Left lung (tissue), 14 donors: ENCODE measurements at regions of chr6 and their contacts with region 1.

Region 1: DNA sequence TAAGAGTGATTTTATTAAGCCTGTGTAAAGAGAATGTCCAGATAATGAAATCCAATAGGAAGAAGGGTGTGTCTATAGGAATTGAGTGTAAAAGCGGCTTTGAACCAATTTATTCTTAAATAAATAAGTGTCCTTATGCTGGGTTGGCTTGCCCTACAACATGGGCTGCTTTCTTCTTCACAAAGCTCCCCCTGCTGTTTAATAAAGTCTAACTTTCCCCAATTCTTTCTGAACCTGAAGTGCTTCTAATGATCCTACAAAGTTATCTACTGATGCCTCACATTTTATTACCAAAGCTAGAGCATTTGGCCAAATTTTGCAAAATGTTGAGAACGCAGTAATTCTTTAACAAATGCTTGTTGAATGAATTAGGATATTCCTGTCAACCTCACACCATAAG is 36.3 kb upstream of the SIRT5 start:
- DNase-seq: peak in 2 of 4 donors; percentile 29 to 61
- ATAC-seq: peak; percentile 72
- H3K4me3 ChIP-seq: no peak overlapping the region
- H3K27ac ChIP-seq: no peak overlapping the region
- H3K4me1 ChIP-seq: no peaks in the 10 kb centered on the region
- H3K27me3 ChIP-seq: no peaks in the 10 kb centered on the region
- CTCF ChIP-seq: peak; percentile 14 to 21

Region 2: DNA sequence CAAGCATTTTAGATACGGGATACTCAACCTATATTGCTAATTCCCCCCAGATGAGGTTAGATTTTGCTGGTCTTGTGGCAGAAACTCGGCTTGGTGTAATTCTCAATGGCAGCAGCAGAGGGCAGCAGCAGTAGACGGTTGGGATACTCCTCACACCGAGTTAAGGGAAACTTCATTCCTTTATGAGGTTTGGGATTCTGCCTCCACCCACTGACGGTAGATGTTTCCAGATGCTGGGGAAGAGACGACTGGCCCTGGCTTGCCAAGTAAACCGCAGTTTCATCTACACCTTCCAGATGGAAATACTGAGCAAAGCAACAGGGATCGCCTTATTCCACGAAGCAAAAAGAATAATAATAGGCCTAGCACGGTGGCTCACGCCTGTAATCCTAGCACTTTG is 201.5 kb before region 1 on chr6:
- intact Hi-C with region 1: loop called in 1 of 2 experiments (anchors 5 kb)
- DNase-seq: peak in 3 of 4 donors; percentile 64 to 80 (median 78)
- ATAC-seq: peak; percentile 94
- H3K4me3 ChIP-seq: no peak overlapping the region
- H3K27ac ChIP-seq: no peak overlapping the region
- H3K4me1 ChIP-seq: peaks cover 4 to 25% of the 10 kb centered on the region in 2 donors
- H3K27me3 ChIP-seq: no peaks in the 10 kb centered on the region
- CTCF ChIP-seq: peak; percentile 82 to 92